Panc1 (cell line): ENCODE measurements at regions of chr11 and their contacts with region 1.

Region 1: GRCh38 chr11:64094463-64095260 is 58.9 kb downstream of the FLRT1 start:
- DNase-seq: peak; percentile 32
- ATAC-seq: peak; percentile 88
- H3K4me3 ChIP-seq: no peak overlapping the region
- H3K27ac ChIP-seq: peak overlapping the region; percentile 89
- H3K4me1 ChIP-seq: peaks cover 62% of the 10 kb centered on the region
- H3K27me3 ChIP-seq: no peaks in the 10 kb centered on the region
- CTCF ChIP-seq: peak; percentile 41; the same call in 1 of the 2 replicates

Region 2: GRCh38 chr11:63614136-63614664 is 480.5 kb before region 1 on chr11 and contains the start of gene PLAAT3:
- CTCF ChIA-PET with region 1: no interaction called
- POLR2A ChIA-PET with region 1: no interaction called
- in situ Hi-C with region 1: no loop called
- intact Hi-C with region 1: no loop called
- DNase-seq: no peak
- ATAC-seq: peak; percentile 91
- H3K4me3 ChIP-seq: peak within 1 kb of the TSS; percentile 60 to 62
- H3K27ac ChIP-seq: peak within 1 kb of the TSS; percentile 45; the same call in 1 of the 2 replicates
- H3K4me1 ChIP-seq: peaks cover 24% of the 10 kb centered on the region
- H3K27me3 ChIP-seq: no peaks in the 10 kb centered on the region
- CTCF ChIP-seq: no peak
- total RNA-seq, gene PLAAT3: 32.6 TPM

Region 3: GRCh38 chr11:64118876-64119665 is 24.4 kb after region 1 on chr11:
- CTCF ChIA-PET with region 1: no interaction called
- POLR2A ChIA-PET with region 1: interaction called, 10 read pairs
- in situ Hi-C with region 1: no loop called
- intact Hi-C with region 1: no loop called
- DNase-seq: no peak
- ATAC-seq: no peak
- H3K4me3 ChIP-seq: no peak overlapping the region
- H3K27ac ChIP-seq: no peak overlapping the region
- H3K4me1 ChIP-seq: peaks cover 3% of the 10 kb centered on the region; the same call in 1 of the 2 replicates
- H3K27me3 ChIP-seq: no peaks in the 10 kb centered on the region
- CTCF ChIP-seq: no peak

Region 4: DNA sequence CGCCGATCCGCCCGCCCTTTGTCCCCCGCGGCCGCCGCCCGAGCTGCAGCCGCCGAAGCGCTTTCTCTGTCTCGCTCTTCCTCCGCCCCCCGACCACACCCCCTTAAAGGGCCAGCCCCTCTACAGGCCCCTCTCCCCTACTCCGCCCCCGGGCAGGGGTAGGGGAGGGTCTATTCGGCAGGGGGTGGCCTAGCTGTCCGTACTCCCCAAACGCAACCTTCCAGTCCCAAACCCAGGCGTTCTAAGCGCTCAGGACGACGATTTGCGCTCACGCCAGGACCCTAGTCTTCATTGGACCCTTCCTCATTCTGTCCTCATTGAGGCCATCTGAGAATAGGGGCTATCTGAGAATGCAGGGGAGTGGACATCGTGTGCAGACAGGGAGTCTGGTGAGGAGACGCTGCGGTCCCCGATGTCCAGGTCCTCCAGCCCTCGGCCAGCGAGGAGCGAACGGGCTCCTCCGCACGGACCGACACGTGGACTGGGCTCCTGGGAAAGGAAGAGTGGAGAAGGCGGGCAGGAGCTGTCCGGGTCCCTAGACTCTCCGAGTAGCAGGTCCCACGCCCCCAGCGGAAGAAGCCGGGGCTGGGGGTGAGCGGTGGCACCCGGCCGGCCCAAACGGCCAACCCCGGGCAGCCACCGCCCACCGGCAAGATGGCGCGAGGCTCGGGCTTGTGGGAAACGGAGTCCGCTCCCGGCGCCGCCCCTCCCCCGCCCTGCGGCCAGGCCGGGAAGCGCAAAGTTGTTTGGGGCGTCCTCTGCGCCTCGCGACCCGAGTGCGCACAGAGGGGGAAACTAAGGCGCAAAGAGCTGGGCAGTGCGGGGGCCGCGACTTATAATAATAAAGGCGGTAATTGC is 152.4 kb after region 1 on chr11 and contains the start of gene PPP1R14B:
- CTCF ChIA-PET with region 1: no interaction called
- POLR2A ChIA-PET with region 1: no interaction called
- in situ Hi-C with region 1: no loop called
- intact Hi-C with region 1: no loop called
- DNase-seq: no peak
- ATAC-seq: peak; percentile 67
- H3K4me3 ChIP-seq: peak within 1 kb of the TSS; percentile 85 to 95
- H3K27ac ChIP-seq: peak within 1 kb of the TSS; percentile 99
- H3K4me1 ChIP-seq: peaks cover 54% of the 10 kb centered on the region
- H3K27me3 ChIP-seq: no peaks in the 10 kb centered on the region
- CTCF ChIP-seq: no peak
- total RNA-seq, gene PPP1R14B: 261 TPM

Region 5: GRCh38 chr11:64285885-64286815 is 191.5 kb after region 1 on chr11:
- CTCF ChIA-PET with region 1: no interaction called
- POLR2A ChIA-PET with region 1: no interaction called
- in situ Hi-C with region 1: no loop called
- intact Hi-C with region 1: no loop called
- DNase-seq: no peak
- ATAC-seq: peak; percentile 9; the same call in 1 of the 2 replicates
- H3K4me3 ChIP-seq: peak overlapping the region; percentile 57 to 98
- H3K27ac ChIP-seq: peak overlapping the region; percentile 82
- H3K4me1 ChIP-seq: peaks cover 28% of the 10 kb centered on the region
- H3K27me3 ChIP-seq: no peaks in the 10 kb centered on the region
- CTCF ChIP-seq: no peak; the same call in 1 of the 2 replicates